Gastrocnemius medialis (tissue), 4 donors: ENCODE measurements at regions of chr15 and their contacts with region 1.

Region 1: GRCh38 chr15:84023636-84024035 is 211.9 kb upstream of the GOLGA6L4 start:
- DNase-seq: no peak
- ATAC-seq: no peak
- H3K4me3 ChIP-seq: no peak overlapping the region
- H3K27ac ChIP-seq: no peak overlapping the region
- H3K4me1 ChIP-seq: no peaks in the 10 kb centered on the region
- H3K27me3 ChIP-seq: no peaks in the 10 kb centered on the region
- CTCF ChIP-seq: peak in 4 of 5 experiments; percentile 24 to 47 (median 37)
- POLR2A ChIP-seq: no peak

Region 2: GRCh38 chr15:83734487-83734886 is 289.1 kb before region 1 on chr15:
- in situ Hi-C with region 1: no loop called
- intact Hi-C with region 1: loop called (anchors 10 kb)
- DNase-seq: no peak
- ATAC-seq: no peak
- H3K4me3 ChIP-seq: no peak overlapping the region
- H3K27ac ChIP-seq: no peak overlapping the region
- H3K4me1 ChIP-seq: no peaks in the 10 kb centered on the region
- H3K27me3 ChIP-seq: no peaks in the 10 kb centered on the region
- CTCF ChIP-seq: no peak
- POLR2A ChIP-seq: no peak